ENCODE measurements at regions of chr19 and their contacts with region 1.

Region 1: GRCh38 chr19:56162258-56162657 is 13.6 kb upstream of the GALP start:
- DNase-seq: no peak
- H3K4me3 ChIP-seq: no peak overlapping the region
- H3K27me3 ChIP-seq: no peaks in the 10 kb centered on the region
- CTCF ChIP-seq: no peak

Region 2: GRCh38 chr19:55674841-55675660 is 487.2 kb before region 1 on chr19 and contains the start of gene EPN1:
- CTCF ChIA-PET with region 1: no interaction called
- POLR2A ChIA-PET with region 1: no interaction called
- DNase-seq: peak; percentile 67
- H3K4me3 ChIP-seq: peak within 1 kb of the TSS; percentile 86
- H3K27me3 ChIP-seq: no peaks in the 10 kb centered on the region
- CTCF ChIP-seq: no peak
- polyA plus RNA-seq, gene EPN1: 31.4 and 60.8 TPM in 2 replicates

Region 3: GRCh38 chr19:56015756-56016155 is 146.5 kb before region 1 on chr19:
- CTCF ChIA-PET with region 1: no interaction called
- POLR2A ChIA-PET with region 1: no interaction called
- DNase-seq: no peak
- H3K4me3 ChIP-seq: no peak overlapping the region
- H3K27me3 ChIP-seq: no peaks in the 10 kb centered on the region
- CTCF ChIP-seq: no peak

Region 4: DNA sequence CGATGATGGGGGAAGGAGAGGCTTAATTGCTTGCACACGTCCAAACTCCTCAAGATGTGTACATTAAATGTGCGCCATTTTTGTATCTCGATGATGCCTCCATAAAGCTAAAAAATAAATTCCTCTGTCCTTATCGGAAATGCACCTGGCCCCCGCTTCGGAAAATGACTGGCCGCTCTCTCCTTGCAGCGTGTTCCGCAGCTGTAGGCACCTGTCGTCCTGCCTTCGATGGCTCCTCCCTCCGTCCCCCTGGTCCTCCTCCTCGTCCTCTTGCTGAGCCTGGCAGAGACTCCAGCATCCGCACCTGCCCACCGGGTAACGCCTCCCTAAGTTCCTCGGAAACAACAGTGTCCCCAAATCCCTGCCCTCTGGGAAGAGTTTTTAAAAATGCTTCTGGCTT is 14.6 kb after region 1 on chr19:
- CTCF ChIA-PET with region 1: interaction called, 17 read pairs
- POLR2A ChIA-PET with region 1: no interaction called
- DNase-seq: no peak
- H3K4me3 ChIP-seq: no peak overlapping the region
- H3K27me3 ChIP-seq: no peaks in the 10 kb centered on the region
- CTCF ChIP-seq: no peak